Left colon (tissue), 2 donors: ENCODE measurements at regions of chr1 and their contacts with region 1.

Region 1: GRCh38 chr1:200479816-200480215 is 70.0 kb upstream of the ZNF281 start:
- DNase-seq: no peak
- ATAC-seq: no peak

Region 2: GRCh38 chr1:200288226-200288625 is 191.6 kb before region 1 on chr1:
- intact Hi-C with region 1: loop called in 1 of 2 experiments (anchors 5 kb)
- DNase-seq: no peak
- ATAC-seq: no peak